CD4-positive, alpha-beta T cell (primary cell): ENCODE measurements at regions of chr7 and their contacts with region 1.

Region 1: DNA sequence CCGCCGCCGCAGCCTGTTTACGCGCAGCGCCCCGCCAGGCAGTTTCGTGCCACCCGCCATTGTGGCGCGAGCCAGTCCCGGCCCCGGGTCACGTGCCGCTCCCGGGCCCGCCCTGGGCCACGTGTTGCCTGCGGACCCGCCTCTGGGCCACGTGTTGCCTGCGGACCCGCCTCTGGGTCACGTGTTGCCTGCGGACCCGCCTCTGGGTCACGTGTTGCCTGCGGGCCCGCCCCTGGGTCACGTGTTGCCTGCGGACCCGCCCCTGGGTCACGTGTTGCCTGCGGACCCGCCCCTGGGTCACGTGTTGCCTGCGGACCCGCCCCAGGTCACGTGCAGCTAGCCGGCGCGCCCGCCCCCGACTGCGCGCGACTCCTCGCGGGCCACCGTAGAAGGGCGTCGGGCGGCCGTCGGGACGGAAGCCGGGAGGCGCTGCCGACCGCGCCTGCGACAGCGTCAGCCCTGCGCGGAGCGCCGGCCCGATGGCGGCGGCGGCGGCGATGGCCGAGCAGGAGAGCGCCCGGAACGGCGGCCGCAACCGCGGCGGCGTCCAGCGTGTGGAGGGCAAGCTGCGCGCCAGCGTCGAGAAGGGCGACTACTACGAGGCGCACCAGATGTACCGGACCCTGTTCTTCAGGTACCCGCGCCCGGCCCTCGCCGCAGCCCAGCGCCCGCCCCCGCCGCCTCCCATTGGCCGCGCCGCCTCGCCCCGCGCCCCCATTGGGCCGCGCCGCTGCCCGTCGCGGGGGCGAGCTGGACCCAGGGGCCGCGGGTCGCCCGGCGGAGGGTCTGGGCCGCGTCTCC is at the start of gene GET4:
- DNase-seq: peak; percentile 92 to 99 (median 97)
- ATAC-seq: peak; percentile 77
- H3K4me3 ChIP-seq: peak within 1 kb of the TSS; percentile 91
- H3K4me3 Mint-ChIP-seq: peak within 1 kb of the TSS; percentile 91
- H3K27ac ChIP-seq: peak within 1 kb of the TSS; percentile 67 to 88
- H3K27ac Mint-ChIP-seq: peak within 1 kb of the TSS; percentile 84
- H3K4me1 ChIP-seq: peaks cover 51% of the 10 kb centered on the region
- H3K4me1 Mint-ChIP-seq: peaks cover 32% of the 10 kb centered on the region
- H3K27me3 ChIP-seq: no peaks in the 10 kb centered on the region
- H3K27me3 Mint-ChIP-seq: no peaks in the 10 kb centered on the region
- CTCF ChIP-seq: no peak
- total RNA-seq, gene GET4: 84.4 to 96.4 TPM

Region 2: DNA sequence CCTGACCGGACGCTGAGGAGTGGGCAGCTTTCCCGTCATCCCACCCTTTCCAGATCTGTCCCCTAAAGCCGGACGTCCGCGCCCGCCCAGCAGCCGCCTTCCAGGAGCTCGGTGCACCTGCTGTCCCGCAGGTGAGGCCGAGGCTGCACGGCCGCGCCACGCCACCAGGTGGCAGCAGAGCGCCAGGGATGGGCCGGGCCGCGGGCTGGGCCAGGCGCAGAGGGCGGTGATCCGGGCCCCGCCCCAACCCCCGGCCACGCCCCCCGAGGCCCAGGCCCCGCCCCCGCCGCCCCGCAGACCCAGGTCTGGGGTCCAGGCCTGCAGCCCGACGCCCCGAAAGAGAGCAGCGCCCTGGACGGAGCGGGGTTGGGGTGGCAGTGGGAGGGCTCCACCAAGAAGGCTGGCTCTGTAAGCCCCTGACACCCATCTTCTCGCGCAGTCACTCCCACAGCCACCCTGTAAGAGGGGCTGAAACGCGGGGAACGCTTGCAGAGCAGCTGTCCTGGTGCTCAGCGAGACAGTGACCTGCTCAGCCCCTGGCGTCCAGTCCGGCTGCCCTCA is 554.2 kb before region 1 on chr7:
- CTCF ChIA-PET with region 1: interaction called, 4 read pairs
- POLR2A ChIA-PET with region 1: no interaction called
- intact Hi-C with region 1: loop called (anchors 1 to 2 kb)
- DNase-seq: peak; percentile 67 to 94 (median 86)
- ATAC-seq: peak; percentile 100
- H3K4me3 ChIP-seq: peak overlapping the region; percentile 5
- H3K4me3 Mint-ChIP-seq: no peak overlapping the region
- H3K27ac ChIP-seq: no peak overlapping the region
- H3K27ac Mint-ChIP-seq: no peak overlapping the region
- H3K4me1 ChIP-seq: peaks cover 10% of the 10 kb centered on the region
- H3K4me1 Mint-ChIP-seq: no peaks in the 10 kb centered on the region
- H3K27me3 ChIP-seq: peaks cover 10 to 24% of the 10 kb centered on the region in 2 experiments
- H3K27me3 Mint-ChIP-seq: peaks cover 41% of the 10 kb centered on the region
- CTCF ChIP-seq: peak; percentile 69

Region 3: DNA sequence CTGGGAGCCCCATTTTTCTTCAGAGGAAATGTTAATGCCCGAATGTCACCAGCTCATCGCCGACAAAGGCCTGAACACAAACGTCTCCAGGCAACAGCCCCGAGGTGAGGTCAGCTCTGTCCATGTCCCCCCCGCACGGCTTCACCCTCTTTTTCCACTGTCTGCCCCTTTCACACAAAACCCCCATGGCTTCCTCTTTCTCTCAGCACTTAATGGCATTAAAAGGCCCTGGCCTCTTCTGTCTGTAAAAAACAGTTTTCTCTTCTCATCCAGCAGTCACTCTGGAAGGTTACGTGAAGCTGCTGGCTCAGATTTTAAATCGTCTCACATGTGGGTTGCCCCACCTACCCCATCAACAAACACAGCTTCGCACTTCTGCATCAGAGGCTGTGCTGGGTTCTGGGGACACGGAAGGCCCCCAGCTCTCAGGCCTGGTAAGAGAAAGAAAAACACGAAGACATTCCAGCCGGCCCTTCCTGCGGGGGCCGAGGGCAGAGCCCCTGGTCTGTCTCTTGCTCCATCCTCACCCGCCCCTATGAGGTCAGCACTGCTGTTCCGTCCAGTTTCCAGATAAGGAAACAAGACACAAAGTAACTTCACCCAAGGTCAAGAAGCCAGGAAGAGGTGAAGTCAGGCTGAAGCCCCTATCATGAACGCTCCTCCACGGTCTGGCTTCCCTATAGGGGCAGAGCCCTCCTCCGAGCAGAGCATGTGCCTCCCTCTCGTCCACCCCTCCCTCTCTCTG is 265.7 kb before region 1 on chr7:
- CTCF ChIA-PET with region 1: no interaction called
- POLR2A ChIA-PET with region 1: no interaction called
- intact Hi-C with region 1: loop called in 1 of 2 experiments (anchors 10 kb)
- DNase-seq: peak in 2 of 14 experiments; percentile 40 to 44
- ATAC-seq: peak; percentile 83
- H3K4me3 ChIP-seq: no peak overlapping the region
- H3K4me3 Mint-ChIP-seq: peak overlapping the region; percentile 59
- H3K27ac ChIP-seq: no peak overlapping the region
- H3K27ac Mint-ChIP-seq: peak overlapping the region; percentile 97
- H3K4me1 ChIP-seq: peaks cover 64% of the 10 kb centered on the region
- H3K4me1 Mint-ChIP-seq: peaks cover 60% of the 10 kb centered on the region
- H3K27me3 ChIP-seq: no peaks in the 10 kb centered on the region
- H3K27me3 Mint-ChIP-seq: no peaks in the 10 kb centered on the region
- CTCF ChIP-seq: no peak

Region 4: DNA sequence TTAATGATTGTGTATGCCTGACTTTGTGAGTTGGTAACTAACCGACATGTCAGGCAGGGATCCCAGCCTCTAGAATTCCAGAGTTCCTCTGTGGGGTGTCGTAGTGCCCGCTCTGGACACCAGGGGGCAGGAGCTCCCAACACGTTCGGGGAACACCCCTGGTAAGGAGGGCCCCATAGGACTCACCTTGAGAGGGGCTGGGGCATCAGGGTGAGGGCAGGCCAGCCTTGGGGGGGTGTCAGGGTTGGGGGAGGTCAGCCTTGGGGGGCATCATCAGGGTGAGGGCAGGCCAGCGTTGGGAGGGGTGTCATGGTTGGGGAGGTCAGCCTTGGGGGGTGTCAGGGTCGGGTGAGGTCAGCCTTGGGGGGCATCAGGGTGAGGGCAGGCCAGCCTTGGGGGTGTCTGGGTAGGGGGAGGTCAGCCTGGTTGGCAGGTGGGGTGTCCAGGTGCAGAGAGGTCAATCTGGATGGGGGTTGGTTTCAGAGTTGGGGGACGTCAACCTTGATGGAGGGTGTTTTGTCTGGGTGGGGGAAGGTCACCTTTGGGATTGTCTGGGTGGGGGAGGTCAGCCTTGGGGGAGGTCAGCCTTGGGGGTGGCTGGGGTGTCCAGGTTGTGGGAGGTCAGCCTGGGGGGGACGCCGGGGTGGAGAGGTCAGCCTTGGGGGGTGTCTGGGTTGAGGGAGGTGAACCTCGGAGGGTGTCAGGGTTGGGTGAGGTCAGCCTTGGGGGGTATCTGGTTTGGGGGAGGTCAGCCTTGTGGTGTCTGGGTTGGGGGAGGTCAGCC is 89.7 kb before region 1 on chr7:
- CTCF ChIA-PET with region 1: interaction called, 22 read pairs
- POLR2A ChIA-PET with region 1: interaction called, 5 read pairs
- intact Hi-C with region 1: loop called (anchors 1 kb)
- DNase-seq: peak; percentile 59 to 85 (median 68)
- ATAC-seq: peak; percentile 100
- H3K4me3 ChIP-seq: no peak overlapping the region
- H3K4me3 Mint-ChIP-seq: no peak overlapping the region
- H3K27ac ChIP-seq: no peak overlapping the region
- H3K27ac Mint-ChIP-seq: no peak overlapping the region
- H3K4me1 ChIP-seq: peaks cover 6% of the 10 kb centered on the region
- H3K4me1 Mint-ChIP-seq: no peaks in the 10 kb centered on the region
- H3K27me3 ChIP-seq: no peaks in the 10 kb centered on the region
- H3K27me3 Mint-ChIP-seq: no peaks in the 10 kb centered on the region
- CTCF ChIP-seq: peak; percentile 74

Region 5: DNA sequence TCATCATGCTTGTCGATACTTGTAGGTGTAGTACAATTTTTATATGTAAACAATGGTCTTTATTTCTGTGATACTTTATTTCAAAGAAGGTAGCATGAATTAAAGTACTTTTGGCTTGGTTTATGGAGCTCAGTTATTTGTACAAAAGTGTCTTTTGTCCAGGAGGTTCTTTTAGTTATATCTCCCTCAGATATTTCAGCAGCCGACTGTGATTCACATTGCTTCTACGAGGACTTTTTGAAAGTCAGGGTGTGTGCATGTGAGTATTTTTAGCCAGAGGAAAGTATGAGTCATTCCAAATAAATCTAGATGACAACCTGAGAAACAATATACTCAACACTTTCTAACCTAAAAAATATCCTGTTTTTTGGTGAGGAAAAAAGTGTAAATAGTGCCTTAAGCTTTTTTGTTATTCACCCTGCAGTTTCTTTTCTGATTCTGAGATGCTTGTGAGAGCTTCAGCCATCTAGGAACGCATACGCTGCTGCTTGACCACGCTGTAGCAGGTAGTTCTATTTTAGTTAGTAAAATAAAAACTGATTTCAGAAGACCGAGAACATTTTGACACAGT is 44.7 kb before region 1 on chr7:
- CTCF ChIA-PET with region 1: interaction called, 22 read pairs
- POLR2A ChIA-PET with region 1: interaction called, 8 read pairs
- intact Hi-C with region 1: loop called (anchors 1 to 2 kb)
- DNase-seq: peak in 5 of 14 experiments; percentile 35 to 61 (median 58)
- ATAC-seq: peak; percentile 29
- H3K4me3 ChIP-seq: peak overlapping the region; percentile 36
- H3K4me3 Mint-ChIP-seq: peak overlapping the region; percentile 85
- H3K27ac ChIP-seq: peak overlapping the region; percentile 73 to 90
- H3K27ac Mint-ChIP-seq: peak overlapping the region; percentile 86
- H3K4me1 ChIP-seq: peaks cover 48% of the 10 kb centered on the region
- H3K4me1 Mint-ChIP-seq: peaks cover 58% of the 10 kb centered on the region
- H3K27me3 ChIP-seq: no peaks in the 10 kb centered on the region
- H3K27me3 Mint-ChIP-seq: no peaks in the 10 kb centered on the region
- CTCF ChIP-seq: no peak

Region 6: GRCh38 chr7:1137510-1138167 is 261.3 kb after region 1 on chr7:
- CTCF ChIA-PET with region 1: no interaction called
- POLR2A ChIA-PET with region 1: no interaction called
- intact Hi-C with region 1: loop called in 1 of 2 experiments (anchors 5 kb)
- DNase-seq: no peak
- ATAC-seq: peak; percentile 46
- H3K4me3 ChIP-seq: peak overlapping the region; percentile 62
- H3K4me3 Mint-ChIP-seq: peak overlapping the region; percentile 95
- H3K27ac ChIP-seq: peak overlapping the region; percentile 50 to 65
- H3K27ac Mint-ChIP-seq: peak overlapping the region; percentile 71
- H3K4me1 ChIP-seq: peaks cover 20% of the 10 kb centered on the region
- H3K4me1 Mint-ChIP-seq: peaks cover 19% of the 10 kb centered on the region
- H3K27me3 ChIP-seq: no peaks in the 10 kb centered on the region
- H3K27me3 Mint-ChIP-seq: no peaks in the 10 kb centered on the region
- CTCF ChIP-seq: no peak